ENCODE measurements at regions of chr18 and their contacts with region 1.

Region 1: GRCh38 chr18:9147440-9148202 is 11.0 kb downstream of the ANKRD12 start:
- DNase-seq: peak; percentile 43
- H3K4me3 ChIP-seq: no peak overlapping the region
- H3K27ac ChIP-seq: peak overlapping the region; percentile 13
- H3K4me1 ChIP-seq: peaks cover 5% of the 10 kb centered on the region
- H3K27me3 ChIP-seq: no peaks in the 10 kb centered on the region
- CTCF ChIP-seq: peak; percentile 64

Region 2: GRCh38 chr18:9066817-9067306 is 80.8 kb before region 1 on chr18:
- intact Hi-C with region 1: loop called (anchors 2 kb)
- DNase-seq: no peak
- H3K4me3 ChIP-seq: no peak overlapping the region
- H3K27ac ChIP-seq: no peak overlapping the region
- H3K4me1 ChIP-seq: no peaks in the 10 kb centered on the region
- H3K27me3 ChIP-seq: no peaks in the 10 kb centered on the region
- CTCF ChIP-seq: no peak

Region 3: DNA sequence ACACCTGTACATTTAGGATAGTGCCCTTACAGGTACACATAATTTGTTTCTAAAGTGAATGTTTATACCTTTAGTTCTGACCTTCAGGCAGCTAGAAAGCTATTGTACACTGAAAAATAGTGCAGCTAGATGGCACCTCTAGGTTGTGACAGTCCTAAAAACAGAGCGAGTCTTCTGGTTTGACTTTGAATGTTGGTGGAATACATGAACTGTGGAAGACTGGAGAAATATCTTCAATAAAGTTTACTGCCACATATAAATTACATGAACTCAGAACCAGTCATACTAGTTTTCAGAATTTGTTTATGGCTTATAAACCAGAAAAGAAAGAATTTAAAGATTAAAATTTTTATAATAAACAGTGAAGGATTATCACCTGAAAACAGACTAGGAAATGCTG is 128.3 kb after region 1 on chr18:
- intact Hi-C with region 1: no loop called
- DNase-seq: no peak
- H3K4me3 ChIP-seq: no peak overlapping the region
- H3K27ac ChIP-seq: no peak overlapping the region
- H3K4me1 ChIP-seq: peaks cover 4% of the 10 kb centered on the region
- H3K27me3 ChIP-seq: no peaks in the 10 kb centered on the region
- CTCF ChIP-seq: no peak

Measured in colonic mucosa (tissue), 4 donors.